ENCODE measurements at regions of chr2 and their contacts with region 1.

Region 1: GRCh38 chr2:224357098-224357901 is 44.6 kb downstream of the FAM124B start:
- DNase-seq: peak; percentile 82
- H3K4me3 ChIP-seq: no peak overlapping the region
- H3K27ac ChIP-seq: no peak overlapping the region
- H3K4me1 ChIP-seq: peaks cover 17% of the 10 kb centered on the region
- H3K27me3 ChIP-seq: no peaks in the 10 kb centered on the region
- CTCF ChIP-seq: peak; percentile 85

Region 2: DNA sequence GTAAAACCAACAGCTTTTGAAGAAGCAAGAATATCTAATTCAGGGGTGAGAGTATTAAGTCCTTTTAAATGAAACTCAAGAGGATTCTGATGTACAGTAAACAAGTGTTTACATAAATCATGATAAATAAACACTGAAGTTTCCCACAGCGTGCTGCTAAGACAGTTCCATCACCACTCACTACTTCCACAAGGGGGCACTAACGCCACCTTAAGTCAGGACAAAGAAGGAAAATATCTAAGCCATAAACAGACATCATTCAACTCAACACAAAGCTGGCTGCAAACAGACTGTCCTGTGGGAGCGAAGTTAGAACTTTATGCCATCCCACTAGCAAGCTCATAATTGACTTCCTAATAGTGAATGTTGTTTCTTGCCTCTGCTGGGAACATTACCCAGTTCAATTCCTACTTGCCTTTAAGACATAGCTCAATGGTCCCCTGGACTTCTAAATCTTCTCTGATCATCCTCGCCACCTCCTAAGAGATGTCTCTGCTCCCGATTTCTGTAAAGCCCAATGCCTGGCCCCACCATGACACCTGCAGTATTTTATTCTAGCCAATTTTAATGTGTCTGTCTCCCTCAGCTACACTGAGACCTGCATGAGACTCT is 363.6 kb before region 1 on chr2:
- CTCF ChIA-PET with region 1: interaction called, 7 read pairs
- POLR2A ChIA-PET with region 1: no interaction called
- intact Hi-C with region 1: loop called (anchors 2 kb)
- DNase-seq: peak; percentile 92
- H3K4me3 ChIP-seq: no peak overlapping the region
- H3K27ac ChIP-seq: peak overlapping the region; percentile 54
- H3K4me1 ChIP-seq: peaks cover 21% of the 10 kb centered on the region
- H3K27me3 ChIP-seq: no peaks in the 10 kb centered on the region
- CTCF ChIP-seq: peak; percentile 91

Region 3: GRCh38 chr2:224449212-224450147 is 92.2 kb after region 1 on chr2:
- CTCF ChIA-PET with region 1: no interaction called
- POLR2A ChIA-PET with region 1: no interaction called
- intact Hi-C with region 1: loop called (anchors 5 kb)
- DNase-seq: peak; percentile 38
- H3K4me3 ChIP-seq: no peak overlapping the region
- H3K27ac ChIP-seq: no peak overlapping the region
- H3K4me1 ChIP-seq: no peaks in the 10 kb centered on the region
- H3K27me3 ChIP-seq: no peaks in the 10 kb centered on the region
- CTCF ChIP-seq: peak; percentile 75

Region 4: DNA sequence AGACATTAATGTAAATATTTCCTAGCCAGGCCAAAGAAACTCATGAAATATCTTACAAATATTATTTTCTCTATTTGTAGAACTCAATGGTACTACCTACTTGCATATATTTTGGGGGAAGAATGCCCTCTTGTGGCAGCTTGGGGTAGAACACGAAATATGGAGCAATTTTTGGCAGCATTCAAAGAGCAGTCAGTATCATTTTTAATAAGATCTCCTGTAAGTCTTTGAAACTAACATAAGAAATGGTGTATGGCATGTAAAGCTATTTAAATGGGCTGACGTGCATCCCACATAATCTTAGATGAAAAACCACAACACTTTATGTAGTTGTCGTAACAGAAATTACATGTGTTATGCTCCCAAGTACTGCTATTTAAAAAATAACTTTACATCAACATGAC is 421.2 kb after region 1 on chr2:
- CTCF ChIA-PET with region 1: no interaction called
- POLR2A ChIA-PET with region 1: no interaction called
- intact Hi-C with region 1: loop called (anchors 5 kb)
- DNase-seq: peak; percentile 69
- H3K4me3 ChIP-seq: no peak overlapping the region
- H3K27ac ChIP-seq: no peak overlapping the region
- H3K4me1 ChIP-seq: no peaks in the 10 kb centered on the region
- H3K27me3 ChIP-seq: no peaks in the 10 kb centered on the region
- CTCF ChIP-seq: peak; percentile 85